ENCODE measurements at regions of chr11 and their contacts with region 1.

Region 1: DNA sequence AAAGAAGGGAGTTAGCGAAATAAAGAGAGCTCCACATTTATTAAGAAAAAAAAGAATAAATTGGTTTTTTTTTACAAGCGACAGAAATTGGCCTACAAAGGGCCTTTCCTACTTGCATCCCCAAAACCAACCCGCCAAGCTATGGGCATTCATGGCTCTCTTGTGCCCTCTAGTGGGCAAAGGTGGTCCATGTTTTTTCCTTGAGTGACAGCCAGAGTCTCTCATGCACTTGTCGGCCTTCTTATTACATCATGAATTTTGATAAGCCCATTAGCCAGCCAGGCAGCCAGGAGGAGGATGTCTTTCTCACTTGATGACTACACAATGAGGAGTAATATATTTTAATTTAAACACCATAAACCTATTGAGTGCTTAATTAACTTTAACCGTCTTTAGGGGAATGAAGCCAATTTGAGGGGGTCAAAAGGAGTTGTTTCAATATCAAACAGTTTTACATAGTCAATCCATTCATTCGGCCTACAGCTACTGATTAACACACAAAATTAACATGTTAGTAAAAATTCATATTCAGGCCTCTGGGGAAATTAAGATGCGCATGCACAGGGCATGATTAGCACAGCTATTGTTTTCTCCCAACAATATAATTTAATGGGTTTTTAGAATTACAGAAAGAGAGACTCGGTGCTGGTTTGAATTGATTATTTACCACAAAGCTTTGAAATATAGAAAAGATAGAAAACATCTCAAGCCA is 85.5 kb downstream of the RCN1 start:
- DNase-seq: peak; percentile 67
- H3K27ac ChIP-seq: no peak overlapping the region
- CTCF ChIP-seq: peak; percentile 78

Region 2: DNA sequence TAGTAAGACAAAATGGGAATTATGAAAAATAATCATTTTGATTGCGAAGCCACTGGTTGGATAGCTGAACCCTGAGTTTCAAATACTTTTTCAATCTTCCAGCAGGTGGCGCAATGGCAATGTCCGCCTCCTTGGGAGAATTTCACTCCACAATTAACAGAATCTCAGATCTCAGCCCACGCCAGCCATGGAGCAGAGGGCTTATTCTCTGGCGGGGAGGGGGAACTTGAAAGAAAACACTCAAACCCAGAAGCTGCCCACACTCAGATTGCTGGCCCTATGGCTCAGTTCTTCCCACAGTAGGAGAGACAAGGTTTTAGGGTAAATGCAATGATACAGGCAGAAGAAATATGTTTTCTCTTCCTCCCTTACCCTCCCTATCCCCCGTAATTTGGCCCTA is 124.2 kb before region 1 on chr11:
- CTCF ChIA-PET with region 1: interaction called, 48 read pairs
- POLR2A ChIA-PET with region 1: no interaction called
- DNase-seq: peak; percentile 61
- H3K27ac ChIP-seq: no peak overlapping the region
- CTCF ChIP-seq: peak; percentile 70

Measured in RWPE1 (cell line).